ENCODE measurements at regions of chr14 and their contacts with region 1.

Region 1: DNA sequence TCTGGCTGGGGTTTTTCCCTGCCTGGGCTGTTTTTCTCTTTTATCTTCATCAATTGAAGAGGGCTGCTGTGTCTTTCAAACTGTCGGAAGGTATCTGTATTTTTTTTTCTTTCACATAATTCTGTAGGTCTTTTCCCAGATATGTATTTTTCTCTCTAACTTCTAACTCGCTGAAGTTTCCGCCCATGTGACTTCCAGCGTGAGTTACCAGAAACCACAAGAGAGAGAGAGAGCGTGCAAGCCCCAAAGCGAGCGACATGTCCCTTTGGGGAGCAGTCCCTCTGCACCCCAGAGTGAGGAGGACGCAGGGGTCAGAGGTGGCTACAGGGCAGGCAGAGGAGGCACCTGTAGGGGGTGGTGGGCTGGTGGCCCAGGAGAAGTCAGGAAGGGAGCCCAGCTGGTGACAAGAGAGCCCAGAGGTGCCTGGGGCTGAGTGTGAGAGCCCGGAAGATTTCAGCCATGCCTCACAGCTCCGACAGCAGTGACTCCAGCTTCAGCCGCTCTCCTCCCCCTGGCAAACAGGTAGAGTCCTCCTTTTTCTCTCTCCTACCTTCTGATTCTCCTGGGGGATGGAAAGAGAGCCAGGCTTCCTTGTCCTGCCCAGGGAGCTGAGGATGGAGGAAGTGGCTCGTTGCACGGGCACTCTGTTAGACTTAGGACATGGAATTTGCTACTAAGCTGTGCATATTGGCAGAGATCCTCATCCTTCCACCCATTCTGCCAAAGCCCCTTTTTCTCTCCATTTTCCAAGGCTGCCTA is at the start of gene BATF:
- DNase-seq: no peak
- H3K4me3 ChIP-seq: no peak within 1 kb of the TSS
- H3K4me3 Mint-ChIP-seq: peak within 1 kb of the TSS; percentile 43
- H3K27ac Mint-ChIP-seq: peak within 1 kb of the TSS; percentile 81
- H3K4me1 ChIP-seq: peaks cover 48% of the 10 kb centered on the region
- H3K4me1 Mint-ChIP-seq: peaks cover 29% of the 10 kb centered on the region
- H3K27me3 ChIP-seq: no peaks in the 10 kb centered on the region
- H3K27me3 Mint-ChIP-seq: no peaks in the 10 kb centered on the region
- CTCF ChIP-seq: no peak
- total RNA-seq, gene BATF: 1.5 and 1.7 TPM in 2 replicates

Region 2: DNA sequence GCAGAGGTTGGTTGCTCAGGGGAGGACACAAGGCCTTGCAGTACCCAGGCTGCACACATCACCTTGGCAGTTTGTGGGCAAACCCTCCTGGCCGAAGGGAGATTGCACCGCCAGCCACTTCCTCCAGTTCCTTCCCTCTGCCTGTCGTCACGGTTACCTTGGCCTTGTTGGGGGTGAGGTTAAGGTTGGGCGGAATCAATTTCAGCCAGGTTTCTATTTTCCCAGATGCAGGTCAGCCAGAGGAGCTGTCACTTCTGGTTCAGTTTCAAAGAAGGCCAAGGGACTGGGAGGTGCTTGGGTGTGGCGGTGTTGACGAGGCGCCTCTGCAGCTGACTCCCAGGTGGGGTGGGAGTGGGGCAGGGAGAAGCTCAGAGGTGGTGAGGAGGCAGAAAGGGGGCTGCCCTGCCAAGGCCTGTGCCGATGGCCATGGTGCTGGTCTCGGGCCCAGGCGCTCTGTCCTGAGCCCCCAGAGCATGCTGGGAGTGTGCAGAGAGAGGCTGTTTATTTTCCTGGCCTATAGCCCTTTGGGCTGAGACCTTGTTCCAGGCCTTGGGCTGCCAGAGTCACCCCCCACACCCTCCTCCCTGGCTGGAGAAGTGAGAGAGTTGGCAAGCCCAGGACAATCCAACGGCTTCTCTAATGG is 63.2 kb before region 1 on chr14:
- CTCF ChIA-PET with region 1: no interaction called
- POLR2A ChIA-PET with region 1: no interaction called
- intact Hi-C with region 1: no loop called
- DNase-seq: no peak
- H3K4me3 ChIP-seq: no peak overlapping the region
- H3K4me3 Mint-ChIP-seq: no peak overlapping the region
- H3K27ac Mint-ChIP-seq: no peak overlapping the region
- H3K4me1 ChIP-seq: peaks cover 21% of the 10 kb centered on the region
- H3K4me1 Mint-ChIP-seq: peaks cover 19% of the 10 kb centered on the region
- H3K27me3 ChIP-seq: no peaks in the 10 kb centered on the region
- H3K27me3 Mint-ChIP-seq: no peaks in the 10 kb centered on the region
- CTCF ChIP-seq: no peak

Region 3: GRCh38 chr14:75487155-75487671 is 35.2 kb before region 1 on chr14:
- CTCF ChIA-PET with region 1: no interaction called
- POLR2A ChIA-PET with region 1: no interaction called
- intact Hi-C with region 1: loop called (anchors 1 kb)
- DNase-seq: no peak
- H3K4me3 ChIP-seq: no peak overlapping the region
- H3K4me3 Mint-ChIP-seq: no peak overlapping the region
- H3K27ac Mint-ChIP-seq: no peak overlapping the region
- H3K4me1 ChIP-seq: no peaks in the 10 kb centered on the region
- H3K4me1 Mint-ChIP-seq: no peaks in the 10 kb centered on the region
- H3K27me3 ChIP-seq: no peaks in the 10 kb centered on the region
- H3K27me3 Mint-ChIP-seq: no peaks in the 10 kb centered on the region
- CTCF ChIP-seq: no peak

Region 4: GRCh38 chr14:75554487-75554886 is 32.1 kb after region 1 on chr14:
- CTCF ChIA-PET with region 1: interaction called, 8 read pairs
- POLR2A ChIA-PET with region 1: interaction called, 5 read pairs
- intact Hi-C with region 1: loop called (anchors 1 kb)
- DNase-seq: peak; percentile 72 to 80
- H3K4me3 ChIP-seq: no peak overlapping the region
- H3K4me3 Mint-ChIP-seq: peak overlapping the region; percentile 62
- H3K27ac Mint-ChIP-seq: peak overlapping the region; percentile 90
- H3K4me1 ChIP-seq: peaks cover 45% of the 10 kb centered on the region
- H3K4me1 Mint-ChIP-seq: peaks cover 42% of the 10 kb centered on the region
- H3K27me3 ChIP-seq: no peaks in the 10 kb centered on the region
- H3K27me3 Mint-ChIP-seq: no peaks in the 10 kb centered on the region
- CTCF ChIP-seq: no peak

Region 5: DNA sequence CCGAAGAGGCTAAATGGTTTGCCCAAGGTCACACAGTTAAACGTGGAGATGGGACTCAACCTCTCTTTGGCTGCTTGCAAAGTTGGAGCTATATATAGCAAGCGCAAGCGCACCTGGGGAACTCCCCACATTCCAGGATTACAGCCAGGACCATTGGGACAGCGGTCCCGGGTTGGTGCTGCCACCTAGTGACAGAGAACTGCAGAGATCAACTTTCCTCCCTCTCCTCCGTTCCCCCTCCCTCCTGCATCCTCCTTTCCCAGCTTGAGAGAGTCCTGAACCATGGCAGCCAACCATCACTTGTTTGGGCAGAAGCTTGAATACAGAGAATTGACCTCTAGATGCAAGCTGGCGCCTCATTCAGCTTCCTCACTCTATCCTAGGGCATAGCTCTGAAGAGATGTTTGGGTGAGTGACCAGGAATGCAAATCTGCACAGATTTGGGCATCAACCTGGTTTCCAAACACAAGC is 38.6 kb after region 1 on chr14:
- CTCF ChIA-PET with region 1: interaction called, 23 read pairs
- POLR2A ChIA-PET with region 1: no interaction called
- intact Hi-C with region 1: loop called (anchors 1 kb)
- DNase-seq: peak; percentile 87 to 90
- H3K4me3 ChIP-seq: no peak overlapping the region
- H3K4me3 Mint-ChIP-seq: no peak overlapping the region
- H3K27ac Mint-ChIP-seq: no peak overlapping the region
- H3K4me1 ChIP-seq: peaks cover 16% of the 10 kb centered on the region
- H3K4me1 Mint-ChIP-seq: peaks cover 29% of the 10 kb centered on the region
- H3K27me3 ChIP-seq: no peaks in the 10 kb centered on the region
- H3K27me3 Mint-ChIP-seq: peaks cover 3% of the 10 kb centered on the region
- CTCF ChIP-seq: peak; percentile 82 to 87

Region 6: GRCh38 chr14:75660630-75661494 is 138.5 kb after region 1 on chr14 and contains the starts of genes ERG28 and TTLL5:
- CTCF ChIA-PET with region 1: interaction called, 3 read pairs
- POLR2A ChIA-PET with region 1: interaction called, 9 read pairs
- intact Hi-C with region 1: loop called (anchors 2 kb)
- DNase-seq: peak; percentile 98 to 99
- H3K4me3 ChIP-seq: peak within 1 kb of the TSS; percentile 87
- H3K4me3 Mint-ChIP-seq: peak within 1 kb of the TSS; percentile 92
- H3K27ac Mint-ChIP-seq: peak within 1 kb of the TSS; percentile 92
- H3K4me1 ChIP-seq: no peaks in the 10 kb centered on the region
- H3K4me1 Mint-ChIP-seq: no peaks in the 10 kb centered on the region
- H3K27me3 ChIP-seq: no peaks in the 10 kb centered on the region
- H3K27me3 Mint-ChIP-seq: no peaks in the 10 kb centered on the region
- CTCF ChIP-seq: no peak
- total RNA-seq, gene ERG28: 31.0 and 36.1 TPM in 2 replicates
- total RNA-seq, gene TTLL5: 38.2 and 45.3 TPM in 2 replicates

Region 7: GRCh38 chr14:77346495-77346894 is 1824.1 kb after region 1 on chr14:
- CTCF ChIA-PET with region 1: interaction called, 12 read pairs
- POLR2A ChIA-PET with region 1: no interaction called
- intact Hi-C with region 1: no loop called
- DNase-seq: no peak
- H3K4me3 ChIP-seq: no peak overlapping the region
- H3K4me3 Mint-ChIP-seq: no peak overlapping the region
- H3K27ac Mint-ChIP-seq: no peak overlapping the region
- H3K4me1 ChIP-seq: no peaks in the 10 kb centered on the region
- H3K4me1 Mint-ChIP-seq: no peaks in the 10 kb centered on the region
- H3K27me3 ChIP-seq: no peaks in the 10 kb centered on the region
- H3K27me3 Mint-ChIP-seq: no peaks in the 10 kb centered on the region
- CTCF ChIP-seq: no peak

Measured in Caco-2 (cell line).